Dorsolateral prefrontal cortex (tissue), 120 donors: ENCODE measurements at regions of chr5 and their contacts with region 1.

Region 1: GRCh38 chr5:91383027-91383955 is at the start of gene ARRDC3:
- DNase-seq: peak; percentile 93 to 97 (median 96)
- H3K4me3 ChIP-seq: peak within 1 kb of the TSS; percentile 71 to 99 (median 88)
- H3K27ac ChIP-seq: peak within 1 kb of the TSS; percentile 94 to 100 (median 100)
- H3K27me3 ChIP-seq: no peaks in the 10 kb centered on the region
- CTCF ChIP-seq: peak in 36 of 56 donors; percentile 4 to 52 (median 30)
- total RNA-seq, gene ARRDC3: 19.2 to 154 (median 46.7) TPM

Region 2: GRCh38 chr5:90866333-90866732 is 517.0 kb before region 1 on chr5:
- intact Hi-C with region 1: loop called in 1 of 2 experiments (anchors 10 kb)
- DNase-seq: no peak
- H3K4me3 ChIP-seq: peak overlapping the region in 11 of 59 donors; percentile 7 to 37 (median 26)
- H3K27ac ChIP-seq: no peak overlapping the region
- H3K27me3 ChIP-seq: no peaks in the 10 kb centered on the region
- CTCF ChIP-seq: peak; percentile 33 to 76 (median 62)

Region 3: GRCh38 chr5:91101600-91102379 is 281.5 kb before region 1 on chr5:
- intact Hi-C with region 1: loop called (anchors 1 to 2 kb)
- DNase-seq: peak in 9 of 10 donors; percentile 51 to 72 (median 58)
- H3K4me3 ChIP-seq: peak overlapping the region in 5 of 59 donors; percentile 1 to 17 (median 13)
- H3K27ac ChIP-seq: peak overlapping the region in 15 of 59 donors; percentile 0 to 42 (median 19)
- H3K27me3 ChIP-seq: no peaks in the 10 kb centered on the region
- CTCF ChIP-seq: peak; percentile 37 to 95 (median 85)

Region 4: GRCh38 chr5:91219803-91220371 is 163.4 kb before region 1 on chr5:
- intact Hi-C with region 1: loop called (anchors 2 to 5 kb)
- DNase-seq: peak in 2 of 10 donors; percentile 48 to 53
- H3K4me3 ChIP-seq: no peak overlapping the region
- H3K27ac ChIP-seq: no peak overlapping the region
- H3K27me3 ChIP-seq: no peaks in the 10 kb centered on the region
- CTCF ChIP-seq: peak in 50 of 56 donors; percentile 12 to 69 (median 48)

Region 5: GRCh38 chr5:91280362-91281269 is 102.7 kb before region 1 on chr5:
- intact Hi-C with region 1: loop called (anchors 1 kb)
- DNase-seq: peak; percentile 85 to 96 (median 91)
- H3K4me3 ChIP-seq: peak overlapping the region; percentile 54 to 88 (median 68)
- H3K27ac ChIP-seq: peak overlapping the region; percentile 80 to 97 (median 91)
- H3K27me3 ChIP-seq: no peaks in the 10 kb centered on the region
- CTCF ChIP-seq: peak in 19 of 56 donors; percentile 7 to 48 (median 25)

Region 6: DNA sequence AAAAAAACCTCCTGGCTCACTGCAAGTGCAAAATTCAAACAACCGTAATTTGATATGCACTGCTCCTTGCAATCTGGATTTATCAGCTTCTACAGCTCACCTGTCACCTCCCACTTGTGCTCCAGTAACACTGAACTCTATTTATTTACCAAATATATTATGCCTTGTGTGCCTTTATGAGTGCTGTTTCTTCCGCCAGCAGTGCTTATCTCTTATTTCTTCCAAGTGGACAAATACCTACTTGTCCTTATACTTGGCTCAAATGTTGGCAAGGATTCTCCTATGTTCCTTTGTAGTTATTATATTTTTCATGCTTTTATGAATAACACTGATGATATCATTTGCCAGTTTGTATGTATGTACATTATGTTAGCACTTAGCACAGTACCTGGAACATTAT is 145.5 kb after region 1 on chr5:
- intact Hi-C with region 1: no loop called
- DNase-seq: no peak
- H3K4me3 ChIP-seq: no peak overlapping the region
- H3K27ac ChIP-seq: no peak overlapping the region
- H3K27me3 ChIP-seq: no peaks in the 10 kb centered on the region
- CTCF ChIP-seq: no peak